ENCODE measurements at regions of chr5 and their contacts with region 1.

Region 1: GRCh38 chr5:156686796-156687195 is 163.3 kb upstream of the PPP1R2B start:
- DNase-seq: no peak

Region 2: DNA sequence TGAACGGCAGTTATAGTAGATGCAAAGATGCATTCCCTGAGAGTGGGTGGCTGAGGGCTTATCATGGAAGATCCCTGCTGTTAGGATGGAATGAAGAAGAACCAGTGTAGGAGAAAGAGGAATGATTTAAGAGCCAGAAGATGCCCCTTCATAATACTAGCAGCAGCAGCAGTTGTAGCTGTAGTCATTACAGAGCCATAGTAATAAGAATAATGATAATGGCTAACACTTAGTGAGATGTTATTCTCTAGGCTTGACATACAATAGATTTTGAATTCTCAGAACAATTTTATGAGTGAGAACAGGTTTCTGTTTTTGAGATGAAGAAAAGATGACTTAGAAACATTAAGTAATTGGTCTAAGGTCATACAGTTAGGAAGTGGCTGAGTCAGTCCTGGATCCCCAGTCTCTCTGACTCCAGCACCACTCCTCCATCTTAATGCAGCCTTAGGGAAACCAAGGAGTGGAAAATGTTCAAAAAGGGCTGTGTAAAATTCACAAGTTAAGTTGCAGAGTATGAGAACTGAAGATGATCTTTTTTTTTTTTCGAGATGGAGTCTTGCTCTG is 819.2 kb before region 1 on chr5:
- intact Hi-C with region 1: no loop called
- DNase-seq: no peak

Region 3: DNA sequence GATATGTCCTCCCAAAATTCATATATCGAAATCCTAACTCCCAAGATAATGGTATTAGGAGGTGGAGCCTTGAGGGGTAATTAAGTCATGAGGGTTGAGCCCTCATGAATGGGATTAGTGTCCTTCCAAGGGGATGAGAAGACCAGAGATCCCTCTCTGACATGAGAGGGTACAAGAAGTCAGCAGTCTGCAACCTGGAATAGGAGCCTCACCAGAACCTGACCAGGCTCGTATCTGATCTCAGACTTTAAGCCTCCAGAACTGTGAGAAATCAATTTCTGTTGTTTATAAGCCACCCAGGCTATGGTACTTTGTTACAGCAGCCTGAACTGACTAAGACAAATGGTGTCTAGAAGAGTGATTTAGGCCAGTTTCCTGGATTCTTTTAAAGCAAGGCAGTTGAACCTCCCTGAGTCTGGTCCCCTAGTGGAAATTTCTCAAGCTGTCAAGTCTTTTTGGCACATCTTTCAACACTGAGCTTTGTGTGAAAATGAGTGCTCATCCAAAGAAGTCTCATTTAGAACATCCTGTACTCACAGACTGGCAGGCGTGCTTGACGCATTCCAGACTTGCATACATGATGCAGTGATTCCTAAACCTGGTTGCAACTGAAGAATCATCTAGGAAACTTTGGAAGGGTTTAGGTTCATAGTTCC is 91.5 kb before region 1 on chr5:
- intact Hi-C with region 1: no loop called
- DNase-seq: no peak

Region 4: DNA sequence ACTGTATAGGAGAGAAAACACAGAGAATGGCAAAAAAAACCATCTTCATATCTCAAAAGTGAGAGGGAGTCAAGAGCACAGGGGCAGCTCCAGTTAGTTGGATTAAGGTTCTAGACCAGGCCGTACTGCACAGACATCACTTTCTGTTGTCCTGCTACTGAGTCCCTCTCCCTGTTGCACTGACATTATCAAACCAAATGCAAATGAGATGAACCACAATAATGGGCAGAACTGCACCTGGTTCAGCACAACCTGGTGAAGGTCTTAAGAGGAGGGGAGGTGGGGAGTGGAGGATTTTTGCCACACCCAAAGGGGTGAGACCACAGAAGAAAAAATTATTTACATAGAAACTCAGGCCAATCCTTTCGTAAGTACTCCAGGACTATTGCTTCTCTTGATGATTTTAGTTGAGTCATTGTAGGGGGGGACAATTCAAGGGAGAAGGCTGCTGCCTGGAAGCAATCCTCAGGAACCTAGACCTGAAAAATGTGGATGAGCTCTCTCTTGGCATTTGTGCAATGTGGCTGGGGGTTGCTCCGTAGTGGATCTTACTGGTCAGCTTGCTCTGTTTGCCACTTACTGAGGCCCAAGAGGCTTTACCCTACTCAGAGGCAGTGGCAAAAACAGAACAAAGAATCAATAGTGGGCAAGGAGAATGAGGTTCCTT is 68.8 kb after region 1 on chr5:
- intact Hi-C with region 1: loop called (anchors 5 kb)
- DNase-seq: no peak

Measured in cardiac septum (tissue), 1 donor.